Activated CD8-positive, alpha-beta T cell treated with anti-CD3 and anti-CD28 coated beads, Interleukin-2, amount 10 ng/mL, durations not matched to agents 7 days and 5 days (primary cell): ENCODE measurements at regions of chr3 and their contacts with region 1.

Region 1: DNA sequence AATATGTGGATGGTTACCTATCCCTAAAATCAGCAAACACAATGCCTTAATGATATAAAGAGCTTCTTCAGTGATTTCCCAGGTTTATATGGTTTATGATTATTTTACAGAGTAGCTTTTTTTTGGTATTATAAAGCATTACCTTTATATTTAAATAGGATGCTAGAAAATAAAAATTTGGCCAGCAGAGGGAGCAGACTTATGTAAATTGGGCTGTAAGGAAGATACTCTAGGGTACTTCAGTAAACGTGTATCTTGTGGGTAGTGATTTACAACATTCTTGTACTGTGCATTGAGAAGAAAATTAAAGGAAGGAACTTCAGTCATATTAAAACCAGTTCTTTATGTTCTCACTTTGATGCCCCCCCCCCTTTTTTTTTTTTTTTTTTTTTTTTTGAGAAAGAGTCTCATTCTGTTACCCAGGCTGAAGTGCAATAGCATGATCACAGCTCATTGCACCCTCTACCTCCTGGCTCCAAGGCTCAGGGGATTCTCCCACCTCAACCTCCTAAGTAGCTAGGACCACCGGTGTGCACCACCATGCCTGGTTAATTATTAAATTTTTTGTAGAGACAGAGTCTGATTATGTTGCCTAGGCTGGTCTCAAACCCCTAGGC is 167.9 kb downstream of the BBX start:
- DNase-seq: no peak
- ATAC-seq: peak; percentile 63
- H3K4me3 Mint-ChIP-seq: no peak overlapping the region
- H3K27ac Mint-ChIP-seq: no peak overlapping the region
- H3K4me1 Mint-ChIP-seq: no peaks in the 10 kb centered on the region
- H3K27me3 Mint-ChIP-seq: no peaks in the 10 kb centered on the region

Region 2: DNA sequence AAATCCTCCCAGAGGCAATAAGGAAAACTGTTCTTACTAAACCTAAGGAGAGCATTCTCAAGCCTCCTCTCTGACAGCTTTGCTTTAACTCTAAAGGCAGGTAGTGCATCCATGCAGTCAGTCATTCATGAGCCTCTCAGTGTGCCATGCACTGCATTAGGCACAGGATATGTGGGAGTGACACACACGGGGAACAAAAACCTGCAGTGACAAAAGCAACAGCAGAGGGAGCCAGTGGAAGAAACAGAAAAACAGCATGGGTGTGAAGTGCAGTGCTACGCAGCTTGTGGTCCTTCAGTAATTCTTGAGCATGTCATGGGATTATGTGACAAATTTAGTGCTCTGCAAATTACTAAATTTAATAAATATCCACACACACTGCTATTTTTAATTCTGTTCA is 62.9 kb after region 1 on chr3:
- CTCF ChIA-PET with region 1: interaction called, 10 read pairs
- POLR2A ChIA-PET with region 1: no interaction called
- DNase-seq: peak; percentile 38
- ATAC-seq: peak; percentile 68
- H3K4me3 Mint-ChIP-seq: no peak overlapping the region
- H3K27ac Mint-ChIP-seq: no peak overlapping the region
- H3K4me1 Mint-ChIP-seq: no peaks in the 10 kb centered on the region
- H3K27me3 Mint-ChIP-seq: no peaks in the 10 kb centered on the region